ENCODE measurements at regions of chr20 and their contacts with region 1.

Region 1: DNA sequence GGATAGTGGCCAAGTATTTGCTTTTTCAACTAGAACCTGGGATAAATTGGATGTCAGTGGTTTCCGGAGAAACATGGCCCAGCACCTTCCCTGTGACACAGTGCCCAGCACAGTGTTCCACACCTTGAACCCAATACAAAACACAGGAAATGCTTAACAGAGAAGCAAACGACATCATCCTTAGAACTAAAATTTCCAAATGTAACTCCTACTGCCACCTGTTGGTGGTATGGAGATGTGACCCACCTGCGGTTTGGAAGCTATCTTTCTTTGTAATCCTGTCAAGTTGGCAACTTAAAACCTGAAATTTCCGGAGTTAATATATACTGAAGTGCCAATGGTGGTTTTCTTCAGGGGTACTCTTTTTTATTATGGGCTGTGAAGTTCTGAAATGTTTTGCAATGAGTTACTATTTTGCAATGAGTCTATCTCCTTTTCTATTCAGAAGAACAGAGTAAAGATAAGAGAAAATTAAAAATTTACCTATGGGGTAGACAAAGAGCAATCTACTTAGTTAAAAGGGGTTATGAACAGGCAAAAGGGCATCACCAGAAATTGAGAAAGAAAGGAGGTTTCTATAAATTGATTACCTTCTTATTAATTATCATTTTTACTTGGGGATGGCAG is 658.8 kb downstream of the PTPRT start:
- DNase-seq: no peak
- ATAC-seq: no peak

Region 2: DNA sequence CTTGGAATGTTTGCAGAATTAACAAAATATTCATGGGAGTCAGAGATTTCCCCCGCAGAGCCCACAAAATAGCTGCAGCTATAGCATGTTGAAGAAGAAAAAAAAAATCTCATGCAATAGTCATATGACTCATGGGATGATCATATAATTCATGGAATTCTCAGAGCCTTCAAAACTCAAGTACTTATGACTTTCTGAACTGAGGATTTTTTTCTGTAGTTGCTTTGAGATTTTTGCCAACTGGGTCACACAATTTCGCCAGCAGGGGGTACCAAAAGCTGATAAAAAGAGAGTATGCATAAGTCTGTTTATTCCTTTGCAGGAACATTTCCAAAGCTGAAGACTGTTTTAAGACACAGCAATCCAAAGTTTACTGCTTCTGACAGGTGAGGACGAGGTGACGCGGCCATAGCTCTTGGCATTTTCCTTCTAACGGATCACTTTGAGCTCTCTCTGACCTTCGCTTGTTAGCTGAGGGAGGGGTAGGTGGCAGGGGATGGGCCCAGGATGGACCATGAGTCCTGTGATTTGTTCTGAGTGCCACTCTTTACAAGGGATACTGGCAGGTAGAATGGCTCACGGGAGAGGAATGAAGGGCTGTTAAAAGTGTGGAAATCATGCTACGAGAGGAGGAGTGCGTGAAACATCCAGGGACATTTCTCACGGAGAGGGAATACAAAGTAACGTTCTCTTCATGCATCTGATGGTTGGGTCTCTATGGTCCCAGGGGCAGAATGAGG is 326.6 kb before region 1 on chr20:
- intact Hi-C with region 1: loop called (anchors 10 kb)
- DNase-seq: no peak
- ATAC-seq: no peak

Region 3: DNA sequence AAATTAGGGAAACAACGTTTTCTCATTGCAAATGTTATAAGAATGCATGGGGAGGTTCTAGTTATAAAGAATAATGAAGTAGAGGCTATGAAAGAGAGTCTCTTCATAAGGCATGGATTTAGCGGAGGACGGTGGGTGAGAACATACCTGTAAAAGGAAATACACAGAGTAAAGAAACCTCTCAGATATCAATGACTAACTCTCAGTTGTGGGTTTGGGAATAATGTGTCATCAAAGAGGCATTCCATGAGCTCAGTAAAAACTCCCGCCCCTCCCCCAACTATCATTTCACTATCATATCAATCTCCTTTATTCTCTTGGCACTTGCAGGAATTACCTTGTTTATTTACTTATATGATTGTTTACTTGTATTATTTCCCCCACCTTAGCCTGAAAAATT is 36.6 kb before region 1 on chr20:
- intact Hi-C with region 1: no loop called
- DNase-seq: no peak
- ATAC-seq: no peak

Region 4: GRCh38 chr20:42587427-42587826 is 56.5 kb after region 1 on chr20:
- intact Hi-C with region 1: no loop called
- DNase-seq: no peak
- ATAC-seq: no peak

Measured in Right ventricle myocardium inferior (tissue), 1 donor.